K562 (cell line): ENCODE measurements at regions of chr3 and their contacts with region 1.

Region 1: DNA sequence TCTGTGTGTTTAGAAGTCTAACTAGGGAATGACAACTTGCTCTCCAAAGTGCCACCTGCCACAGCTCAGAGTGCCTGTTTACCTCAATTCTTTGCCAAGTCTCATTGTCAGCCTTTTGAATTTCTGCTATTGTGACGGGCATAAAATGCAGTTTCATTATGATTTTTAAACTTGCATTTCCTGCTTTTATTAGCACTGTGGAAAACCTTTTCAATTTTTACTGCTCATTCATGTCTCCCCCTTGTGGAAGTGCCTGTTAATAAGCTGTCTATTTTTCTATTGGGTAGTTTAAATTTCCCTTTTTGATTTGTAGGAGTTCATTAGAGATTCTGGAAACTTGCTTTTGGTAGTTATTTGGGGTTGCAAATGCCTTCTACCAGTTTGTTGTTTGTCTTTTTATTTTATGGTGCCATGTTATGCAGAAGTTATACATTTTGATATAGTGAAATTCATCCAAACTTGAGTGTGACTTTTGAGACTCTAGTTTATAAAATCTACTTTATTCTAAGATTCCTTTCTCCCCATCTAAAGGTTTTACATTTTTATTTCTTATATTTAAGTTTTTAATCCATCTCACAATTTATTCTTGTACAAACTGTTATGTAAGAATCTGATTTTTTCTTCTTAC is 53.9 kb upstream of the FRMD4B start:
- DNase-seq: peak in 1 of 4 experiments; percentile 3
- ATAC-seq: no peak
- H3K4me3 ChIP-seq: no peak overlapping the region
- H3K27ac ChIP-seq: no peak overlapping the region
- H3K4me1 ChIP-seq: no peaks in the 10 kb centered on the region
- H3K27me3 ChIP-seq: no peaks in the 10 kb centered on the region
- CTCF ChIP-seq: peak; percentile 17 to 44 (median 35); a peak in 3 of 6 replicates
- EP300 ChIP-seq: no peak
- POLR2A ChIP-seq: no peak
- RAD21 ChIP-seq: peak in 1 of 2 experiments; percentile 19; a peak in 1 of 4 replicates

Region 2: GRCh38 chr3:69451594-69451993 is 11.8 kb after region 1 on chr3:
- CTCF ChIA-PET with region 1: no interaction called
- POLR2A ChIA-PET with region 1: no interaction called
- in situ Hi-C with region 1: no loop called
- intact Hi-C with region 1: no loop called
- DNase-seq: no peak
- ATAC-seq: no peak
- H3K4me3 ChIP-seq: no peak overlapping the region
- H3K27ac ChIP-seq: no peak overlapping the region
- H3K4me1 ChIP-seq: no peaks in the 10 kb centered on the region
- H3K27me3 ChIP-seq: no peaks in the 10 kb centered on the region
- CTCF ChIP-seq: peak in 1 of 3 experiments; percentile 16; a peak in 2 of 6 replicates
- EP300 ChIP-seq: no peak
- POLR2A ChIP-seq: no peak
- RAD21 ChIP-seq: no peak

Region 3: GRCh38 chr3:69671082-69671952 is 231.6 kb after region 1 on chr3:
- CTCF ChIA-PET with region 1: no interaction called
- POLR2A ChIA-PET with region 1: no interaction called
- in situ Hi-C with region 1: no loop called
- intact Hi-C with region 1: loop called (anchors 10 kb)
- DNase-seq: peak; percentile 22 to 50 (median 35)
- ATAC-seq: peak; percentile 56; the same call in 2 of the 3 replicates
- H3K4me3 ChIP-seq: no peak overlapping the region
- H3K27ac ChIP-seq: no peak overlapping the region
- H3K4me1 ChIP-seq: no peaks in the 10 kb centered on the region; a peak in 1 of 5 replicates
- H3K27me3 ChIP-seq: no peaks in the 10 kb centered on the region
- CTCF ChIP-seq: peak; percentile 29 to 77 (median 50); a peak in 5 of 6 replicates
- EP300 ChIP-seq: no peak
- POLR2A ChIP-seq: no peak
- RAD21 ChIP-seq: peak; percentile 73 to 75